IMR-90 (cell line): ENCODE measurements at regions of chr11 and their contacts with region 1.

Region 1: GRCh38 chr11:19577976-19578619 is 134.5 kb upstream of the NAV2 start:
- DNase-seq: peak; percentile 66
- ATAC-seq: peak; percentile 83
- H3K4me3 ChIP-seq: no peak overlapping the region
- H3K27ac ChIP-seq: peak overlapping the region; percentile 74
- H3K4me1 ChIP-seq: peaks cover 20% of the 10 kb centered on the region
- H3K27me3 ChIP-seq: no peaks in the 10 kb centered on the region
- CTCF ChIP-seq: no peak
- POLR2A ChIP-seq: no peak
- RAD21 ChIP-seq: no peak

Region 2: GRCh38 chr11:19290356-19290755 is 287.7 kb before region 1 on chr11:
- CTCF ChIA-PET with region 1: no interaction called
- POLR2A ChIA-PET with region 1: no interaction called
- dilution Hi-C with region 1: no loop called
- in situ Hi-C with region 1: no loop called
- intact Hi-C with region 1: no loop called
- DNase-seq: no peak
- ATAC-seq: no peak; the same call in 1 of the 2 replicates
- H3K4me3 ChIP-seq: no peak overlapping the region
- H3K27ac ChIP-seq: no peak overlapping the region
- H3K4me1 ChIP-seq: no peaks in the 10 kb centered on the region
- H3K27me3 ChIP-seq: peaks cover 14% of the 10 kb centered on the region
- CTCF ChIP-seq: no peak
- POLR2A ChIP-seq: no peak
- RAD21 ChIP-seq: no peak

Region 3: GRCh38 chr11:19474954-19475715 is 103.0 kb before region 1 on chr11:
- CTCF ChIA-PET with region 1: no interaction called
- POLR2A ChIA-PET with region 1: no interaction called
- dilution Hi-C with region 1: no loop called
- in situ Hi-C with region 1: no loop called
- intact Hi-C with region 1: no loop called
- DNase-seq: no peak
- ATAC-seq: no peak
- H3K4me3 ChIP-seq: no peak overlapping the region
- H3K27ac ChIP-seq: no peak overlapping the region
- H3K4me1 ChIP-seq: no peaks in the 10 kb centered on the region
- H3K27me3 ChIP-seq: peaks cover 50% of the 10 kb centered on the region
- CTCF ChIP-seq: no peak
- POLR2A ChIP-seq: no peak
- RAD21 ChIP-seq: no peak

Region 4: GRCh38 chr11:19712281-19713220 is 134.5 kb after region 1 on chr11 and contains the start of gene NAV2:
- CTCF ChIA-PET with region 1: no interaction called
- POLR2A ChIA-PET with region 1: no interaction called
- dilution Hi-C with region 1: no loop called
- in situ Hi-C with region 1: no loop called
- intact Hi-C with region 1: loop called (anchors 5 kb)
- DNase-seq: peak; percentile 91
- ATAC-seq: peak; percentile 91
- H3K4me3 ChIP-seq: peak within 1 kb of the TSS; percentile 63
- H3K27ac ChIP-seq: peak within 1 kb of the TSS; percentile 84
- H3K4me1 ChIP-seq: peaks cover 25% of the 10 kb centered on the region
- H3K27me3 ChIP-seq: no peaks in the 10 kb centered on the region
- CTCF ChIP-seq: 0 out of 2 replicates have a peak, but pooled peaks have one; percentile 1
- POLR2A ChIP-seq: peak; percentile 95
- RAD21 ChIP-seq: peak; percentile 25; the same call in 1 of the 2 replicates
- total RNA-seq, gene NAV2: 4.5 and 4.7 TPM in 2 replicates

Region 5: GRCh38 chr11:20337526-20338154 is 759.5 kb after region 1 on chr11:
- CTCF ChIA-PET with region 1: no interaction called
- POLR2A ChIA-PET with region 1: no interaction called
- dilution Hi-C with region 1: no loop called
- in situ Hi-C with region 1: no loop called
- intact Hi-C with region 1: loop called (anchors 5 kb)
- DNase-seq: peak; percentile 11
- ATAC-seq: peak; percentile 69
- H3K4me3 ChIP-seq: no peak overlapping the region
- H3K27ac ChIP-seq: no peak overlapping the region
- H3K4me1 ChIP-seq: no peaks in the 10 kb centered on the region
- H3K27me3 ChIP-seq: peaks cover 16% of the 10 kb centered on the region
- CTCF ChIP-seq: peak; percentile 30
- POLR2A ChIP-seq: no peak
- RAD21 ChIP-seq: no peak; the same call in 1 of the 2 replicates